ENCODE measurements at regions of chr4 and their contacts with region 1.

Region 1: DNA sequence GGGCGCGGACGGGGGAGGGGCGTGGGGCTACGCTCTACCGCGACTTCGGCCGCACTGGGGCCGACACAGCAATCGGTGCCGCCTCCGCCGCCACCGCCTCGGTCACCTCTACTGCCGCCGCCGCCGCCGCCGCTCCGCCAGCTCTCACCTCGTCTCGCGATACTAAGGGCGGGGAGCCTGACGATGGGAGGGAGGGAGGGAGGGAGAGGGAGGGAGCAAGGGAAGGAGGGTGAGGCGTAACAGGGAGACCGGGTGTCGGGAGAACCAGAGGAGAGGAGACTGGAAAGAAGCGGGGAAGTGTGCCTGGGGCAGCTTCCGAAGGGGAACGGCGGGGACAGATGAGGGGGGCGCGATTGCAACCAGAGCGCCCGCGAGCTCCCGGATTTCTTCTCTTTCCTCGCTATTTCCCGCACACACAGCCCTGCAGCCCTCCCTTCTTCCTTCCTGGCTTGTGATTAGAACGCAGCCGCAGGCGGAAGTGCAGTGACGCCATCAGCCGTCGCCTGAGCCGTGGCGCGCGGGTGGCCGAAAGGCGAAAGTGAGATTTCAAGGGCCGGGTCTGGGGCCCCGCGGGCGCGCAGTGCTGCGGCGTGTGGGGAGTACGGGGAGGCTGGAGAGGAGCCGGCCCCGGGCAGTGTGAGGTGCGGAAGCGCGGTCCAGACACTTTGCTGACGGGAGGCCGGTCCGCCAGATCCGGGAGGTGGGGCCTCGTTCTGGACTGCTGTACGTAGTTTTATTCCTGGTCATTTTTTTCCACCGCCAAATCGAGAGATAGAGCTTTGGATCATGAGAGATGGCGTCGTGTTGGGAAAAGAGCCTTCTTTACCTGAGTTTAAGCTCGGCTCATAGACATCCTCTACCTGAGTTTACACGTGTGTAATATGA is at the start of gene ANKRD17:
- DNase-seq: peak; percentile 82 to 92 (median 89)
- ATAC-seq: peak; percentile 87
- H3K4me3 ChIP-seq: peak within 1 kb of the TSS; percentile 81
- H3K4me3 Mint-ChIP-seq: peak within 1 kb of the TSS; percentile 98 to 100 (median 99)
- H3K27ac ChIP-seq: peak within 1 kb of the TSS; percentile 98
- H3K27ac Mint-ChIP-seq: peak within 1 kb of the TSS; percentile 99 to 100 (median 100)
- H3K4me1 ChIP-seq: peaks cover 6 to 44% of the 10 kb centered on the region in 2 donors
- H3K4me1 Mint-ChIP-seq: peaks cover 37 to 90% (median 65%) of the 10 kb centered on the region in 7 donors
- H3K27me3 ChIP-seq: no peaks in the 10 kb centered on the region
- H3K27me3 Mint-ChIP-seq: no peaks in the 10 kb centered on the region
- total RNA-seq, gene ANKRD17: 54.4 to 67.5 (median 59.6) TPM

Region 2: DNA sequence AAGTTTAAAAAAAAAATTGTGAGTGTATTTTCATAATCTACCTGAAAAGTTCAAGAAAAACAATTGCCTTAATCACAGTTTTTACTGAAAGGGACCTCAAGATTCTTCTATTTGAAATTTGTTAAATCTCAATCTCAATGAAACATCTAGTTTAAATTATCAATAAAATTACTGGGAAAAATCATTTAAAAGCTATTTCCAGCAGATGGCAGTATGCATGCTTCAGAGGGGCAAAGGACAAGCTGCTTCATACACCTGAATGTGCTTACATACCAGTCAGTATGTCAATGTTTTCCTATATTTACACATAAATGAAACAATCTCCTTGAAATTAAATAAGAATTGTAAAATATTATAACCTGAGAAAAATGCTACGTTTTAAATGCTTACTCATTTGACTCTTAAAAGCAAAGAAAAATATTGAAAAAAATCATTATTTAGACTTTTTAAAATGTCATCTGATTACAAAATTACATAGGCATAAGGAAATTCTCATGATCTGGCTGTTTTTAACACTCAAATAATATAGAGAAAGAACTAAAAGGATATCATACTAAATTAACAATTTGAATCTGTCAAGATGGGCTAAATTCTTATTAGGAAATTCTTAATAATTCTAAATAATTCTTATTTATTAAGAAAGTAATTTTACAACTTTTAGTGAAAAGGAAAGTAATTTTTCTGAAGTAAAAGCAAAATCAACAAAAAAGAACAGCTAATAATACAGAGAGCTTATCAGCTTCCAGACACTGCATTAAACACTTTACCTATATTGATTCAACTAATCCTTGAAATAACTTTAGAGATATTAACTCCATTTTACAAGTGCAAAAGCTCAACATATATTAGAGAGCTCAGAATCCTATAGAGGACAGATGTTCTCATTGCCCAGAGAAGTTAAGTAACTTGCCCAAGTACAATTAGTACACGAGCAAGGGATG is 932.0 kb before region 1 on chr4:
- CTCF ChIA-PET with region 1: no interaction called
- POLR2A ChIA-PET with region 1: no interaction called
- intact Hi-C with region 1: loop called in 1 of 2 experiments (anchors 5 kb)
- DNase-seq: peak in 1 of 9 donors; percentile 12
- ATAC-seq: no peak
- H3K4me3 ChIP-seq: no peak overlapping the region
- H3K4me3 Mint-ChIP-seq: no peak overlapping the region
- H3K27ac ChIP-seq: no peak overlapping the region
- H3K27ac Mint-ChIP-seq: no peak overlapping the region
- H3K4me1 ChIP-seq: no peaks in the 10 kb centered on the region
- H3K4me1 Mint-ChIP-seq: no peaks in the 10 kb centered on the region
- H3K27me3 ChIP-seq: no peaks in the 10 kb centered on the region
- H3K27me3 Mint-ChIP-seq: peaks cover 0 to 22% (median 10%) of the 10 kb centered on the region in 5 donors

Region 3: DNA sequence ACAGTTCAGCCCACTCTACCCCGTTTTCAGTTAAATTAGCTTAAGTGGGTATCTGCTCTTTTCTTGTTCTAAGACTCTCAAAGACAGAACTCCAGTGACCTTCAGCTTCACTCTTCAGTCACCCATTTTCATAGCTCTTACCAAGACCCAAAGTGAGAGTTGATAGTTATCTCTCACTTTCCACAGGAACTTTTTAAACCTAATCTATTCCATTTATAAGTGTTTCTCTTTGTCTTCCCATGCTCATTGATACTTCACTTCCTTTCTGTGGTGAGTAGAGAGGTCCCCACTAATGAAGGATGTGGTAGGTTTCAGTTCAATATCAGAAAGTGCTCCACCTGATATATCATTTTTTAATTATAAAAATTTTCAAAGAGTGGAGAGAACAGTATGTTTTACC is 222.8 kb before region 1 on chr4:
- CTCF ChIA-PET with region 1: no interaction called
- POLR2A ChIA-PET with region 1: no interaction called
- intact Hi-C with region 1: loop called (anchors 1 kb)
- DNase-seq: no peak
- ATAC-seq: no peak
- H3K4me3 ChIP-seq: no peak overlapping the region
- H3K4me3 Mint-ChIP-seq: no peak overlapping the region
- H3K27ac ChIP-seq: no peak overlapping the region
- H3K27ac Mint-ChIP-seq: no peak overlapping the region
- H3K4me1 ChIP-seq: no peaks in the 10 kb centered on the region
- H3K4me1 Mint-ChIP-seq: peaks cover 0 to 10% (median 0%) of the 10 kb centered on the region in 7 donors
- H3K27me3 ChIP-seq: no peaks in the 10 kb centered on the region
- H3K27me3 Mint-ChIP-seq: peaks cover 0 to 14% (median 2%) of the 10 kb centered on the region in 5 donors

Region 4: GRCh38 chr4:73127839-73128453 is 131.0 kb before region 1 on chr4:
- CTCF ChIA-PET with region 1: interaction called, 4 read pairs
- POLR2A ChIA-PET with region 1: no interaction called
- intact Hi-C with region 1: loop called (anchors 1 kb)
- DNase-seq: peak in 4 of 9 donors; percentile 8 to 34 (median 16)
- ATAC-seq: peak; percentile 81
- H3K4me3 ChIP-seq: no peak overlapping the region
- H3K4me3 Mint-ChIP-seq: no peak overlapping the region
- H3K27ac ChIP-seq: no peak overlapping the region
- H3K27ac Mint-ChIP-seq: peak overlapping the region in 5 of 9 donors; percentile 8 to 51 (median 29)
- H3K4me1 ChIP-seq: no peaks in the 10 kb centered on the region
- H3K4me1 Mint-ChIP-seq: peaks cover 0 to 12% (median 0%) of the 10 kb centered on the region in 7 donors
- H3K27me3 ChIP-seq: no peaks in the 10 kb centered on the region
- H3K27me3 Mint-ChIP-seq: no peaks in the 10 kb centered on the region

Region 5: DNA sequence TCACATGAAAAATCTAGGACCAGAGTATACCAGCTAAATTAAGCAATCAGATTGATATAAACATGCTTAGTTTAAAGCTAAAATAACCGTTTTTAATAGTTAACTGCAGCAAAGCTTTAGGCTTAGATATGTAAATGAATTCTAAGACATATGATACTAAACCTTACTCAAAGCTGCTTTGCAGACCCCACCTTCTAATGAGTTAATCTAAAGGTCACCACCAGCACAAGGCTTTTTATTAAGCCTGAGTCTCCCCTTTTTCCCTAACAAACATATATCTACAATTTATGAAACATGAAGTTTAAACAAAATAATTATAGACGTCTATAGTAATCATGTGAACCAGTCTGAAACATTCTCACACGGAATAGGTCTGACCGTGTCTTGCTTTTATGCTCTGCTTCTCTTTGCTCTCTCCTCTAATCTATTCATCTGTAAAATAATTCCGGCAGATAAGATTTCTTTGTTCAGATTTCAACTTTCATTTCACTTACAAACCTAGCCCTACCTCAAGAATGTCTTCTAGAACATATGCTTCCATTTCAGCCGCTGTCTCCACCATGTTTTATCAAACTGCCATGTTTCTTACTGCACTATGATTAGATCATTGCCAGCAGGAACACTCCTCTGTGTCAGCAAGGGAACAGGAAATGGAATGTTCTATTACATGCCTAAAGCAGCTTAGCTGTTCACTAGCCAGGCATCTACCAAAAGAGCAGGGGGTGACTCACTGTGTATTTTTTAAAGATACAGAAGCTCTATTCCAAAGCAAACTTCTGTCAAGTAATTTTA is 36.3 kb before region 1 on chr4:
- CTCF ChIA-PET with region 1: interaction called, 4 read pairs
- POLR2A ChIA-PET with region 1: interaction called, 18 read pairs
- intact Hi-C with region 1: loop called (anchors 1 kb)
- DNase-seq: peak in 8 of 9 donors; percentile 39 to 90 (median 82)
- ATAC-seq: peak; percentile 100
- H3K4me3 ChIP-seq: peak overlapping the region; percentile 62
- H3K4me3 Mint-ChIP-seq: no peak overlapping the region
- H3K27ac ChIP-seq: peak overlapping the region; percentile 86
- H3K27ac Mint-ChIP-seq: no peak overlapping the region
- H3K4me1 ChIP-seq: peaks cover 9 to 18% of the 10 kb centered on the region in 2 donors
- H3K4me1 Mint-ChIP-seq: peaks cover 19 to 62% (median 54%) of the 10 kb centered on the region in 7 donors
- H3K27me3 ChIP-seq: no peaks in the 10 kb centered on the region
- H3K27me3 Mint-ChIP-seq: no peaks in the 10 kb centered on the region

Region 6: GRCh38 chr4:74157561-74158465 is 898.9 kb after region 1 on chr4 and contains the start of gene MTHFD2L:
- CTCF ChIA-PET with region 1: no interaction called
- POLR2A ChIA-PET with region 1: no interaction called
- intact Hi-C with region 1: loop called in 1 of 2 experiments (anchors 2 kb)
- DNase-seq: peak; percentile 68 to 88 (median 75)
- ATAC-seq: peak; percentile 97
- H3K4me3 ChIP-seq: peak within 1 kb of the TSS; percentile 68
- H3K4me3 Mint-ChIP-seq: peak within 1 kb of the TSS; percentile 86 to 95 (median 90)
- H3K27ac ChIP-seq: peak within 1 kb of the TSS; percentile 78
- H3K27ac Mint-ChIP-seq: peak within 1 kb of the TSS; percentile 62 to 96 (median 90)
- H3K4me1 ChIP-seq: peaks cover 6 to 9% of the 10 kb centered on the region in 2 donors
- H3K4me1 Mint-ChIP-seq: peaks cover 10 to 48% (median 26%) of the 10 kb centered on the region in 7 donors
- H3K27me3 ChIP-seq: no peaks in the 10 kb centered on the region
- H3K27me3 Mint-ChIP-seq: peaks cover 0 to 30% (median 0%) of the 10 kb centered on the region in 5 donors
- total RNA-seq, gene MTHFD2L: 7.5 to 13.7 (median 10.4) TPM